ENCODE measurements at regions of chrX and their contacts with region 1.

Region 1: GRCh38 chrX:111869639-111870034 is 6.3 kb upstream of the TRPC5OS start:
- DNase-seq: peak; percentile 35
- H3K4me3 ChIP-seq: no peak overlapping the region
- H3K27ac ChIP-seq: no peak overlapping the region
- H3K4me1 ChIP-seq: no peaks in the 10 kb centered on the region
- H3K27me3 ChIP-seq: peaks cover 2% of the 10 kb centered on the region
- CTCF ChIP-seq: peak; percentile 68 to 72

Region 2: GRCh38 chrX:111687305-111687704 is 182.3 kb before region 1 on chrX:
- CTCF ChIA-PET with region 1: no interaction called
- dilution Hi-C with region 1: no loop called
- in situ Hi-C with region 1: no loop called
- intact Hi-C with region 1: no loop called
- DNase-seq: no peak
- H3K4me3 ChIP-seq: no peak overlapping the region
- H3K27ac ChIP-seq: no peak overlapping the region
- H3K4me1 ChIP-seq: no peaks in the 10 kb centered on the region
- H3K27me3 ChIP-seq: peaks cover 4% of the 10 kb centered on the region
- CTCF ChIP-seq: no peak

Region 3: DNA sequence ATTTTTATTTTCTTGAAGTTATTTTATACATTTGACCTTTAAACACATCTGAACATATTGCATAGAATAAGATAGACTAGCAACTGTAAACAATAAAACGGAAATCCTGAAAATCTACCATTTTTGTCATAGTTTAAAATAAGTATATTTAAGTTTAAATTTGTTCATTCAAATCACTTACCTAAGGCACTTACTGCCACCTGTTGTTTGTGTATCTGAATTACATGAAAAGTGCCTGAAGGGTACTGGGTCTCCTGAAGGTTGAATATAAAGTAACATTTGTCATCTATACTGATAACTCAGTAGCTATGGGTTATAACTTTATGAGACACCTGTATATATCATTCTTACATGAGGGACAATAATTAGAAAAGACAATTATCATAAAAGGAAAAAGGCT is 174.4 kb after region 1 on chrX:
- CTCF ChIA-PET with region 1: no interaction called
- dilution Hi-C with region 1: no loop called
- in situ Hi-C with region 1: no loop called
- intact Hi-C with region 1: loop called (anchors 1 kb)
- DNase-seq: no peak
- H3K4me3 ChIP-seq: no peak overlapping the region
- H3K27ac ChIP-seq: no peak overlapping the region
- H3K4me1 ChIP-seq: no peaks in the 10 kb centered on the region
- H3K27me3 ChIP-seq: peaks cover 6% of the 10 kb centered on the region
- CTCF ChIP-seq: peak; percentile 16 to 34

Region 4: GRCh38 chrX:112642349-112642748 is 772.7 kb after region 1 on chrX:
- CTCF ChIA-PET with region 1: no interaction called
- dilution Hi-C with region 1: no loop called
- in situ Hi-C with region 1: loop called in 1 of 2 experiments (anchors 25 kb)
- intact Hi-C with region 1: no loop called
- DNase-seq: peak; percentile 43
- H3K4me3 ChIP-seq: no peak overlapping the region
- H3K27ac ChIP-seq: no peak overlapping the region
- H3K4me1 ChIP-seq: no peaks in the 10 kb centered on the region
- H3K27me3 ChIP-seq: peaks cover 3% of the 10 kb centered on the region
- CTCF ChIP-seq: peak; percentile 76 to 81